A549 (cell line): ENCODE measurements at regions of chr4 and their contacts with region 1.

Region 1: DNA sequence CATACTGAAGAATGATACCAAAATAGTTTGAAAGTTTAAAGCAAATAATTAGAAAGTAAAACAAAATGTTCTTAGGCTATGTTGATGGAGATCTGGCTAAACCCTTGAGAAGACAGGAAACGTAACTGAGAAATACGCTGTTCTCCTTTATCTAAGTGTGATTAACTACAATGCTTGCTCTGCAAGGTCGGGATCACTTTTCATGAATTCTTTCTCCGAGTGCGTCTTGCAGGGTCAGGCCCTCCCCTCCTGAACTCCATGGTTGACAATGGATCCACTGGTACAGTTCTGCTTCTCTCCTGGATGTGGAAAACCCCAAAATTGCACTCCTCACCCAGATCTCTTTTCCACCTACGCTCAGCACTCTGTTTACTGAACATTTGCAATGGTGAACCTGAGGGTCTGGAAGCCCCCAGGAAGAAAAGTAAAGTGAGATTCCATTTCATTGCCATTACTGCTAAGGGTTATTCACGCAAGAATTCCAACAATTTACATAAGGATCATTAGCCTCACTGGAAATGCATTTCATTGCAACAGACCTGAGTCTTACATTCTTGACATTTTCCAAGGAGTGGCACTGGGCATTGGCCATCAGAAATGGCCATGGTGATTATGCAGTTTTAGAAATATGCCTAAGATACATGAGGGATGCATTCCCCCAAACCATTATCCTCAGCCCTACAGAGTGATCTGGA is 24.6 kb upstream of the WWC2 start:
- DNase-seq: peak in 1 of 2 experiments; percentile 18
- ATAC-seq: peak in 1 of 2 experiments; percentile 60; a peak in 3 of 6 replicates
- H3K4me3 ChIP-seq: no peak overlapping the region
- H3K27ac ChIP-seq: peak overlapping the region in 1 of 2 experiments; percentile 28; a peak in 1 of 6 replicates
- H3K4me1 ChIP-seq: peaks cover 12% of the 10 kb centered on the region; the same call in 2 of the 3 replicates
- CTCF ChIP-seq: no peak
- EP300 ChIP-seq: no peak
- POLR2A ChIP-seq: no peak
- RAD21 ChIP-seq: no peak

Region 2: DNA sequence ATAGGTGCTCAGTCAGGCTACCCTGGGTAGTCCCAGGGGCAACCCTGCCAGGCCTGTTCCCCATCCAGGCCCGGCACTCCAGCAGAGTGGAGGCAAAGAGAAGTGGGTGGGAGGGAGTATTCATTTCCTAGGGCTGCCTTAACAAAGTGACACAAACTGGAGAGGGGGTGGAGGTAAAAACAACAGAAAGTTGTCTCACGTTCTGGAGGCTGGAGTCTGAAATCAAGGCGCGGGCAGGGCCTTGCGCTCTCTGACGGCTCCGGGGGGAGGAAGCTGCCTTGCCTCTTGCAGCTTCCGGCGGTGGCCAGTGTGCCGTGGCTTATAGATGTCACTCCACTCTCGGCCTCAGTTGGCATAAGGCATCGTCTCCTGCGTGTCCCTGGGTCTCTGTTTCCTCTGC is 248.1 kb before region 1 on chr4:
- CTCF ChIA-PET with region 1: no interaction called
- POLR2A ChIA-PET with region 1: no interaction called
- DNase-seq: no peak
- ATAC-seq: no peak
- H3K4me3 ChIP-seq: no peak overlapping the region
- H3K27ac ChIP-seq: no peak overlapping the region
- H3K4me1 ChIP-seq: no peaks in the 10 kb centered on the region
- CTCF ChIP-seq: no peak
- EP300 ChIP-seq: no peak
- POLR2A ChIP-seq: no peak
- RAD21 ChIP-seq: no peak

Region 3: GRCh38 chr4:183059797-183060196 is 14.6 kb before region 1 on chr4:
- CTCF ChIA-PET with region 1: interaction called, 13 read pairs
- POLR2A ChIA-PET with region 1: no interaction called
- DNase-seq: no peak
- ATAC-seq: no peak
- H3K4me3 ChIP-seq: no peak overlapping the region
- H3K27ac ChIP-seq: no peak overlapping the region
- H3K4me1 ChIP-seq: no peaks in the 10 kb centered on the region
- CTCF ChIP-seq: no peak
- EP300 ChIP-seq: no peak
- POLR2A ChIP-seq: no peak
- RAD21 ChIP-seq: no peak

Region 4: GRCh38 chr4:183249857-183250256 is 175.4 kb after region 1 on chr4:
- CTCF ChIA-PET with region 1: interaction called, 168 read pairs
- POLR2A ChIA-PET with region 1: no interaction called
- DNase-seq: peak; percentile 11 to 39
- ATAC-seq: peak; percentile 54 to 86; a peak in 4 of 6 replicates
- H3K4me3 ChIP-seq: no peak overlapping the region
- H3K27ac ChIP-seq: no peak overlapping the region
- H3K4me1 ChIP-seq: no peaks in the 10 kb centered on the region
- CTCF ChIP-seq: peak; percentile 55
- EP300 ChIP-seq: no peak
- POLR2A ChIP-seq: no peak
- RAD21 ChIP-seq: peak; percentile 72 to 80

Region 5: DNA sequence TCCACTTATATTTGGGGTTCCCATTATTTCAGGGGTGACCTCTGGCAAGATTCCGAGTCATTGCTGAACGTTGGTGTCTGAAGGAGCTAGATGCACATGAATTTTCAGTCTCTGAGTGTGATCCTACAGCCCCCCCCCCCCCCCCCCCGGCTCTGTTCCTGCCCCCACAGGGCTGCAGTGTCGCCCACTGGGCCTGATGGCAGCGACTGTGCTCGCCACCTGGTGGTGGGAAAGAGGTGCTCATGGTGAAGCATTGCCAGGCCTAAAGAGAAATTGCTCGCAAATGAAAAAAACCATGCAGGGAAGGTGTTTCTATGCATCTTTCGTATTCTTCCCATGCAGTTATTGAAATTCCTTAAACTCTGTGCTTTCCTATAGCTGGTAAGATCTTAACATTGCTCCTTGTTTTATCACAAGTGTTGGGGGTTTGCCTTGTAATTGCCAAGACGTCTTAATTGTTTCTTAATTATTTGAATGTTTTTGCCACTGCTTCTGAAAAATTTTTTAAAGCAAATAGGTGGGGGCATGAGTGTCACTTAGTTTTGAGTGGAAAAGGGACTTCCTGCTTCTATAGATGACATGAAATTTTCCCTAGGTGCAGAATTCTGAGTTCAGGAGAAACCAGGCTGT is 182.4 kb after region 1 on chr4:
- CTCF ChIA-PET with region 1: interaction called, 168 read pairs
- POLR2A ChIA-PET with region 1: no interaction called
- DNase-seq: peak; percentile 36 to 50
- ATAC-seq: peak; percentile 85 to 92; a peak in 4 of 6 replicates
- H3K4me3 ChIP-seq: no peak overlapping the region
- H3K27ac ChIP-seq: no peak overlapping the region
- H3K4me1 ChIP-seq: peaks cover 20% of the 10 kb centered on the region; the same call in 2 of the 3 replicates
- CTCF ChIP-seq: peak; percentile 49
- EP300 ChIP-seq: no peak
- POLR2A ChIP-seq: no peak
- RAD21 ChIP-seq: peak; percentile 56 to 60